Panc1 (cell line): ENCODE measurements at regions of chr11 and their contacts with region 1.

Region 1: GRCh38 chr11:62962391-62962981 is 22.3 kb downstream of the SLC22A6 start:
- DNase-seq: no peak
- ATAC-seq: no peak
- H3K4me3 ChIP-seq: no peak overlapping the region
- H3K27ac ChIP-seq: no peak overlapping the region
- H3K4me1 ChIP-seq: no peaks in the 10 kb centered on the region
- H3K27me3 ChIP-seq: peaks cover 6% of the 10 kb centered on the region; the same call in 1 of the 2 replicates
- CTCF ChIP-seq: no peak

Region 2: DNA sequence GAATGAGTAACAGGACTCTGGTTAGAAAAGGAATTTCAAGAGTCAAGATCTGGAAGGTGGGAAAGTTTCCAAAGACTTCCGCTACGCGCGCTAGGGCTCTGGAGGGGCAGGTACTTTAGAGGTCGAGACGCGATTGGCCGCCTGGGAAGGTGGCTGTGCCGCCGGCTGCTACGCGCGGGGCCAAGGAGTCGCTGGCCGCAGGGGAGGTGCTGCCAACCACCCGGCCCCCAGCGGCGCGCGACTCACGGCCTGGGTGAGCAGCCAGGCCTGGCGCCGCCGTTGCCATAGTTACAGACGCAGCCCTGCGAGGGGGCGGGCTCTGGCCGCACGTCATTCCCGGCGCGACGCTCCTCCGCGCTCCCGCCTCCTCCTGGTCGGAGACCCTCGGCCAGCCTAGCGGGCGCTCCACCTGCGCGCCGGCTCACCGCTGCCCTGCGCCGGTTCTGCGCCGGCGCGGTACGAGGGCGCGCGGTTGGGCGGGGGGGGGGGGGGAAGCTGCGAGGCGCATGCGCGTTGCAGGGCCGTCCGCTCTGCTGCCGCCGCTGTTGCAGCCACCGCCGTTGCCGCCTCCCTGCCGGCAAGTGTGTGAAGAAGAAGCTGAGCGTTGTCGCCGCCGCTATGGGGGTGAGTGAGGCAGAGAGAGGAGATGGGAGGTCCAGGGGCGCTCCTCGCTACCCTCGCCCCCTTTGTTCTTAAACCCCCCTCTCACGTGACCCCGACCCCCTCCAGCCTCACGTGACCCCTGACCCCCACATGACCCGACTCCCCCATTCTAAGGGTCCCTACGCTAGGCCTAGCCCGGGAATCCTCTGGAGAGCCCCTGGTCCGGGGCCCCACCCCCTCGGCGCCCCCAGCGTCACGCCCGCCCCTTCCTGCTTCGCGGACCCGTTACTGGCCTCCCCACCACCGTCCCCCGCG is 976.3 kb after region 1 on chr11 and contains the start of gene NAA40:
- CTCF ChIA-PET with region 1: no interaction called
- POLR2A ChIA-PET with region 1: interaction called, 16 read pairs
- in situ Hi-C with region 1: no loop called
- intact Hi-C with region 1: no loop called
- DNase-seq: peak; percentile 76
- ATAC-seq: peak; percentile 98
- H3K4me3 ChIP-seq: peak within 1 kb of the TSS; percentile 65 to 93
- H3K27ac ChIP-seq: peak within 1 kb of the TSS; percentile 92
- H3K4me1 ChIP-seq: peaks cover 16% of the 10 kb centered on the region
- H3K27me3 ChIP-seq: no peaks in the 10 kb centered on the region
- CTCF ChIP-seq: no peak
- total RNA-seq, gene NAA40: 43.2 TPM